ENCODE measurements at regions of chr15 and their contacts with region 1.

Region 1: DNA sequence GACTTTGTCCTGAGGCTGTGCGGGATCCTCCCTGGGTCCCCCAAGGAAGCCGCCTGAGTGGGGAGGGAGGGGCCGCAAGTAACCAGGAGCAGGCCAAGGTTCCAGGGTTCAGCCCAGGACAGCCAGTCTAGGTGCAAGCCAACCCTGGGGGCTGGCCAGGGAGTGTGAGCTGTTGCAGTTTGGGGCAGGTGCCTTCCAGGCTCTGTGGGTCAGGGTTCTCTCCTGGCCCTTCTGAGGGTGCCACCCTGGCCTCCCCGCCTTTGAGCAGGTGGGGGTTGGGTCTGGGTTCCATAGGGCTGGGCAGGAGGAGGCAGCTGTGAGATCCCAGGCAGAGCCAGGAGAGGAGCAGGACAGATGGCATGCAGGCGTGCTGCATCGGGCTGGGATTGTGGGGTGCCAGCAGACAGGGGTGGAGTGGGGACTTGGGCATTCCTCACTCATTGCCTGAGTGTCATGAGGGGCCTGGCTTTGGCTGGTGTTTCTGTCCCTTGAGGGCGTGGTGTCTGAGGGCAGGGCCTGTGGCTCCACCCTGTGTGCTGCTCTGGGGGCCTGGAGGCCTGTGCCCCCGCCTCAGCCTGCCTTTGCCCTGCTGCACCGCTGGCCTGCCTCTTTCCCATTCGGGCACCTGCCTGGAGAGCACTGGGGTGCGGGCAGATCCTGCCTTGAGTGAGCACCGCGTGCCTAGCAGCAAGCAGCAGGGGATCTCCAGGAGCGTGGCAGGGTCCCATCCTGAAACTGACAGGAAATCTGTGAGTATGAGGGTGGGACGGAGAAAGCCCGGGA is 18.4 kb downstream of the KLF13 start:
- DNase-seq: no peak
- H3K4me3 Mint-ChIP-seq: peak overlapping the region; percentile 82
- H3K27ac Mint-ChIP-seq: peak overlapping the region; percentile 97
- H3K4me1 Mint-ChIP-seq: peaks cover 87% of the 10 kb centered on the region
- H3K27me3 Mint-ChIP-seq: no peaks in the 10 kb centered on the region

Region 2: DNA sequence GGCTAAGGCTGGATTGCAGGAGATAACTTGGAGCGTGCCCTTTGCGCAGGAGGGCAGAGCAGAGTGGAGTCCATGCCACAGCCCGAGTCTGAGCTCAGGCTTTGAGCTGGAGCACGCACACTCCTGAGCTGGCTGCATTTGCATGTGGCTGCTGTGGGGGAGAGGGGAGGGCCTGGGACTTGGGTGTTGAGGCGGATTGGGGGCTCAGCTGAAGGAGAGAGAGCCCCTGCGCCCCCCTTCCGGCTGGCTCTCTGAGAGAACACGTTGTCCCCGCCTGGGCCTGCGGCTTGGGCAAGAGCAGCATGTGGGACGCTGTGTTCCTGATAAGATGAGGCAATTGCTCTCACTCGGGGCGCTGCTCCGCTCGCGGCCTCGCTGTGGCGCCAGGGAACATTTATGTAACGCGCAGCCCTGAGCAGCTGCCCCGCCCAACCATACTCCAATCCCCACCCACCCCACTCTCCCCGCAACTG is 20.7 kb after region 1 on chr15:
- intact Hi-C with region 1: loop called (anchors 2 kb)
- DNase-seq: peak; percentile 72
- H3K4me3 Mint-ChIP-seq: peak overlapping the region; percentile 61
- H3K27ac Mint-ChIP-seq: peak overlapping the region; percentile 100
- H3K4me1 Mint-ChIP-seq: peaks cover 88% of the 10 kb centered on the region
- H3K27me3 Mint-ChIP-seq: no peaks in the 10 kb centered on the region

Measured in activated T-helper 2 cell treated with anti-CD3 and anti-CD28 coated beads, Interferon-gamma antibody, Interleukin-2, Interleukin-4, amounts not matched to agents 10 μg/mL and 5 μg/mL and 100 μg/mL, durations not matched to agents 14 hours and 24 hours and 36 hours (primary cell).